CD8-positive, alpha-beta T cell (primary cell): ENCODE measurements at regions of chr19 and their contacts with region 1.

Region 1: GRCh38 chr19:39435499-39436349 is at the start of gene RPS16:
- DNase-seq: peak; percentile 97 to 99 (median 99)
- ATAC-seq: peak; percentile 89
- H3K4me3 ChIP-seq: peak within 1 kb of the TSS; percentile 88
- H3K4me3 Mint-ChIP-seq: peak within 1 kb of the TSS; percentile 100
- H3K27ac ChIP-seq: peak within 1 kb of the TSS; percentile 85 to 92
- H3K27ac Mint-ChIP-seq: peak within 1 kb of the TSS; percentile 99
- H3K4me1 ChIP-seq: peaks cover 25% of the 10 kb centered on the region
- H3K4me1 Mint-ChIP-seq: peaks cover 47% of the 10 kb centered on the region
- H3K27me3 ChIP-seq: no peaks in the 10 kb centered on the region
- H3K27me3 Mint-ChIP-seq: no peaks in the 10 kb centered on the region
- CTCF ChIP-seq: no peak
- total RNA-seq, gene RPS16: 4,439 to 4,447 TPM

Region 2: DNA sequence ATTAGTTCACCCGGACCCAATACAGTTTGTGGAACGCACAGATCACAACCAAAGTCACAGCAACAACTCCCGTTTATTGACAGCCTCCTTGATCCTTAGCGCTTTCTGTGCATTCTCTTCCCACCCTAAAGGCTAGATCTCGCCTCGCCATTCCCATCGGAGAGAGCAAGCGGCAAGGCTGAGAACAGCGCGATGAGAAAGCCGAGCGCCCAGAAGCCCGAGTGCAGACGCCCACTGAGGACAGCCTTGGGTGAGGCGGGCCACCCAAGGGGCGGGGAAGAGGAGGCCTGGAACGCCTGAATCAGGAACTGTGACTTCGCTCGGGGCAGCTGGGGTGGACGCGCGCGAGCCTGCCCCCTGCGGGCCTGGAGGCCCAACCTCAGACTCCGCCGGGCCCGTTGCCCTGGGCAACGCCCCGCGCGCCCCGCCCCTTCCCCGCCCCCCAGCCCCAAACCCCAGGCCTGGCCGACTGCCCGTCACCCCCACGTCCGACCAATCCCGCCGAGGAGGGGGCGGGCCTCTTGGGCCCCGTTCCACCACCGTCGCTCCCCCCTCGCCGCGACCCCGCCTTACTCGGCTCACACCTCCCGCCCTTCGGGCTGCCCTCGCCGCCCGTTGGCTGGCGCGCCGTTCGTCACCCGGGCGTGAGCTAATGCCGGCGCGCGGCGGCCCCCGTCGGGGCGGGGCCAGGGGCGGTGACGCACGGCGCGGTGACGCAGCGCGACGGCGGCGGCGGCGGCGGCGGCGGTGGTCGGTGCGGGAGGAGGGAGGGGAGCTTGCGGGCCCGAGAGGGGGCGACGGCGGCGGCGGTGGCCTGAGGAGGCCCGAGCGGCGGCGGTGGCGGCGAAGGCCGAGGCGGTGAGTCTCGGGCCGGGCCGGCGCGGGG is 93.8 kb before region 1 on chr19 and contains the start of gene SAMD4B:
- CTCF ChIA-PET with region 1: interaction called, 3 read pairs
- POLR2A ChIA-PET with region 1: interaction called, 13 read pairs
- intact Hi-C with region 1: loop called (anchors 1 to 2 kb)
- DNase-seq: peak; percentile 98 to 100 (median 99)
- ATAC-seq: peak; percentile 90
- H3K4me3 ChIP-seq: peak within 1 kb of the TSS; percentile 93 to 97
- H3K4me3 Mint-ChIP-seq: peak within 1 kb of the TSS; percentile 100
- H3K27ac ChIP-seq: peak within 1 kb of the TSS; percentile 67 to 88
- H3K27ac Mint-ChIP-seq: peak within 1 kb of the TSS; percentile 98
- H3K4me1 ChIP-seq: peaks cover 29% of the 10 kb centered on the region
- H3K4me1 Mint-ChIP-seq: peaks cover 69% of the 10 kb centered on the region
- H3K27me3 ChIP-seq: no peaks in the 10 kb centered on the region
- H3K27me3 Mint-ChIP-seq: no peaks in the 10 kb centered on the region
- CTCF ChIP-seq: peak; percentile 73
- total RNA-seq, gene SAMD4B: 68.3 to 78.1 TPM

Region 3: GRCh38 chr19:39397360-39398296 is 38.1 kb before region 1 on chr19:
- CTCF ChIA-PET with region 1: interaction called, 6 read pairs
- POLR2A ChIA-PET with region 1: interaction called, 28 read pairs
- intact Hi-C with region 1: loop called in 1 of 2 experiments (anchors 1 kb)
- DNase-seq: peak; percentile 88 to 98 (median 94)
- ATAC-seq: peak; percentile 41
- H3K4me3 ChIP-seq: peak overlapping the region; percentile 12 to 18
- H3K4me3 Mint-ChIP-seq: peak overlapping the region; percentile 71
- H3K27ac ChIP-seq: peak overlapping the region; percentile 33 to 92
- H3K27ac Mint-ChIP-seq: peak overlapping the region; percentile 96
- H3K4me1 ChIP-seq: peaks cover 51% of the 10 kb centered on the region
- H3K4me1 Mint-ChIP-seq: peaks cover 56% of the 10 kb centered on the region
- H3K27me3 ChIP-seq: no peaks in the 10 kb centered on the region
- H3K27me3 Mint-ChIP-seq: no peaks in the 10 kb centered on the region
- CTCF ChIP-seq: peak; percentile 94

Region 4: DNA sequence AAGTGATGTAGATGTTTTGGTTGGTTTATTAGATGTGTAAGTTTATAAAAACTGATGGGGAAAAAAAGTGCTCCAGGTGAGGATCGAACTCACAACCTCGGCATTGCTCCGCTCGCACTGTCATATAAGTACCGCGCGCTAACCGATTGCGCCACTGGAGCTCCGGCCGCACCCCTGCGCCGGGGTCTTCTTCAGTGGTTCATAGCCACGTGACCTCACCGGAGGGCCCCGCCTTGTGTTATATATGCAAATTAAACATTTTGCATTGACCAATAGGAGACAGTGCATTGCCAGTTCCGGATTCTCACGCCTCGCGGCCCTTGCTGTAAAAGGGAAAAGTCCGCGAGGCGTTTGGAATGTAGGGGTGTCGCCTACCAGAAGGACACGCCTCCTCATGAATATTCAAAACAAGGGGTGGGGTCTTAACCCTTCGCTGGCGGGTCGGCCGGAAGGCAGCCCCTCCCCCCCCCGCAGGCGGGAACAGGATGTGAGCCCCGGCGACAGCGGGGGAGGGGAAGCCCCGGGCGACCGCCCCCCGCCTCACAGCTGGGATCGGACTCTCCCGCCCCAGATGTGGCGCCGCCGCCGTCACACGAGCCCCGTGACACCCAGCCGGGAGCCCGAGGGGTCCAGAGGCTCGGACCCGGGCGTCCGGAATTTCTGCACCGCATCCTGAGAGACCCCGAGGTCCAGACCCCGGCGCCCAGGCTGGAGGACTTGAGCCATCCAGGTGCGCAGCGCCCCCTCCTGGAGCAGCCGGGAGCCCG is 23.4 kb before region 1 on chr19 and contains the start of gene PLEKHG2:
- CTCF ChIA-PET with region 1: interaction called, 3 read pairs
- POLR2A ChIA-PET with region 1: interaction called, 32 read pairs
- intact Hi-C with region 1: loop called (anchors 1 kb)
- DNase-seq: peak; percentile 95 to 99 (median 97)
- ATAC-seq: peak; percentile 57
- H3K4me3 ChIP-seq: peak within 1 kb of the TSS; percentile 95
- H3K4me3 Mint-ChIP-seq: peak within 1 kb of the TSS; percentile 89
- H3K27ac ChIP-seq: peak within 1 kb of the TSS; percentile 94 to 100
- H3K27ac Mint-ChIP-seq: peak within 1 kb of the TSS; percentile 96
- H3K4me1 ChIP-seq: peaks cover 26% of the 10 kb centered on the region
- H3K4me1 Mint-ChIP-seq: peaks cover 33% of the 10 kb centered on the region
- H3K27me3 ChIP-seq: no peaks in the 10 kb centered on the region
- H3K27me3 Mint-ChIP-seq: no peaks in the 10 kb centered on the region
- CTCF ChIP-seq: peak; percentile 84
- total RNA-seq, gene PLEKHG2: 54.8 to 69.0 TPM

Region 5: DNA sequence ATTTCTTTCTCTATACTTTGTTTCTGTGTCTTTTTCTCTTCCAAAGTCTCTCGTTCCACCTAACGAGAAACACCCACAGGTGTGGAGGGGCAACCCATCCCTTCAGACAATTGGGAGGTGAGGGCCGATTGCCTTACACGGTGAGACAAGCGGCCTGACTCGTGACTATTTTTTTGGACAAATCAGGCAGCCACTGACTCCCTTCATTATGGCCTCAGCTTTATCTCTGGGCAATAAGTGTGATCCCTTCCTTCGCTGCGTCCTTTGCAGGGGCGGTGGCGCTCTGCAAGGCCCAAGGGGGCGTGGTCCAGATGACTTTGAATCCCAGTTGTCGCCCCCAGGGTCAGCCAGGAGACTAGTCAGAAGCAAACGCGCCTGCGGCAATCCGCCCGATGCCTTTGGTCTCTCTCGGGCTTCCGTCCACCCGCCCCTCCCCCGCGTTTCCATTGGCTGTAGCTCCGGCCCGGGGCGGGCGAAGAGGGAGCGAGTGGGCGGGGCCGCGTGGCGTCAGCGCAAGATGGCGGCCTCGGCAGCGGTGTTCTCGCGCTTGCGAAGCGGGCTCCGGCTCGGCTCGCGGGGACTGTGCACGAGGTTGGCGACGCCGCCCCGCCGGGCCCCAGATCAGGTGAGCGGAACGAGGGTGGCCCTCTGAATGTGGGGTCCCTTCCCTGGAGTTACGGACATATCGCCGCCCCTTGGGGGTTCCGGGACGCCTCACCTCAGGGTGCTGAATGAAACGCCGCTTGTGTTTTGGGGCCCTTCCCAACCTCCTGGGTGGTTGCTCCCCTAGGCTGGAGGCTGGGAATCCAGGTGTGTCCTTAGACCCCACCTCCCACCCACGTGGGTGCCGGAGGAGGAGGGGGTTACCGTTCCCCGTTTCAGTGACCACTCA is 44.9 kb after region 1 on chr19 and contains the start of gene TIMM50:
- CTCF ChIA-PET with region 1: interaction called, 6 read pairs
- POLR2A ChIA-PET with region 1: interaction called, 6 read pairs
- intact Hi-C with region 1: loop called in 1 of 2 experiments (anchors 2 kb)
- DNase-seq: peak; percentile 94 to 98 (median 97)
- ATAC-seq: peak; percentile 98
- H3K4me3 ChIP-seq: peak within 1 kb of the TSS; percentile 85 to 98
- H3K4me3 Mint-ChIP-seq: peak within 1 kb of the TSS; percentile 91
- H3K27ac ChIP-seq: peak within 1 kb of the TSS; percentile 82
- H3K27ac Mint-ChIP-seq: peak within 1 kb of the TSS; percentile 90
- H3K4me1 ChIP-seq: peaks cover 15% of the 10 kb centered on the region
- H3K4me1 Mint-ChIP-seq: peaks cover 27% of the 10 kb centered on the region
- H3K27me3 ChIP-seq: no peaks in the 10 kb centered on the region
- H3K27me3 Mint-ChIP-seq: no peaks in the 10 kb centered on the region
- CTCF ChIP-seq: no peak
- total RNA-seq, gene TIMM50: 48.6 to 56.7 TPM

Region 6: GRCh38 chr19:39492225-39492624 is 56.5 kb after region 1 on chr19:
- CTCF ChIA-PET with region 1: no interaction called
- POLR2A ChIA-PET with region 1: no interaction called
- intact Hi-C with region 1: no loop called
- DNase-seq: no peak
- ATAC-seq: no peak
- H3K4me3 ChIP-seq: no peak overlapping the region
- H3K4me3 Mint-ChIP-seq: no peak overlapping the region
- H3K27ac ChIP-seq: no peak overlapping the region
- H3K27ac Mint-ChIP-seq: no peak overlapping the region
- H3K4me1 ChIP-seq: no peaks in the 10 kb centered on the region
- H3K4me1 Mint-ChIP-seq: no peaks in the 10 kb centered on the region
- H3K27me3 ChIP-seq: no peaks in the 10 kb centered on the region
- H3K27me3 Mint-ChIP-seq: peaks cover 2% of the 10 kb centered on the region
- CTCF ChIP-seq: no peak

Region 7: DNA sequence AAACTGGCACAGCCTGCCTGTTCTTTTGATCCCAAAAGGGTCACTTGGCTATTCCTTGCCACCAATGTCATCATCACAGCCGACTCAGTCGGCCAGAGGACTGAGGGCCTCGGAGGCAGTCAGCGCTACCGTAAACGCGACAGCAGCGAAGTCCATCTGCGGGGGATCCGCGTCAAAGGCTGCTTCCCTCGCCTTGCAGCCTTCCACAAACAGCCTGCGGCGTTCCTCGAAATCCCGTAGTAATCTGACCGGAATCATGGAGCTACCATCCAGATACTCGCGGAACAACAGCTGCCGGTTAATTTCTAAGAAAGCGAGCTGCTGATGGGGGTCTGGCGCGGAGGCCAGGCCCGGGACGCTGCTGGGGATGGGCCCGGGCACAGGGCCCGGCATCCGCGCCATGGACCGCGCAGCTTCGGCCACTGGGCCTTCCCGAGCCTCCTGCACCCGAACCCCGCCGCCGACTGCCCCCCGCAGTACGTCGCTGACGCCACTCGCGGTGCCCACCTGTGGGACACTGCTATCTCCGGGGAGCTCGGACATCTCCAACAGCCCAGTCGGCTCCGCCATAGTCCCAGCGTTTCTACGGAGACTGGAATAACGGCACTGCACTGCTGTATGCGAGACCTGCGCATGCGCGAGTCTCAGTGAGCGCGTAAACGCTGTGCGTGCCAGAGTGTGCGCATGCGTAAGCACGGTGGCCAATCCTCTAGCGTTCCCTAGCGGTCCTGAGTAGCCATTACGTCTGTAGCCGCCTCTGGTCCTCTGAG is 96.7 kb after region 1 on chr19 and contains the start of gene EID2B:
- CTCF ChIA-PET with region 1: interaction called, 26 read pairs
- POLR2A ChIA-PET with region 1: interaction called, 5 read pairs
- intact Hi-C with region 1: loop called in 1 of 2 experiments (anchors 1 kb)
- DNase-seq: peak; percentile 83 to 98 (median 96)
- ATAC-seq: peak; percentile 98
- H3K4me3 ChIP-seq: peak within 1 kb of the TSS; percentile 77 to 93
- H3K4me3 Mint-ChIP-seq: peak within 1 kb of the TSS; percentile 93
- H3K27ac ChIP-seq: peak within 1 kb of the TSS; percentile 69 to 80
- H3K27ac Mint-ChIP-seq: peak within 1 kb of the TSS; percentile 87
- H3K4me1 ChIP-seq: peaks cover 9% of the 10 kb centered on the region
- H3K4me1 Mint-ChIP-seq: peaks cover 31% of the 10 kb centered on the region
- H3K27me3 ChIP-seq: no peaks in the 10 kb centered on the region
- H3K27me3 Mint-ChIP-seq: no peaks in the 10 kb centered on the region
- CTCF ChIP-seq: peak; percentile 99
- total RNA-seq, gene EID2B: 3.5 to 3.7 TPM